Activated CD8-positive, alpha-beta T cell treated with anti-CD3 and anti-CD28 coated beads for 36 hours (primary cell): ENCODE measurements at regions of chr11 and their contacts with region 1.

Region 1: GRCh38 chr11:68312117-68312779 is at the start of gene LRP5:
- DNase-seq: peak; percentile 27
- ATAC-seq: peak; percentile 56
- H3K4me3 Mint-ChIP-seq: peak within 1 kb of the TSS; percentile 92
- H3K27ac Mint-ChIP-seq: peak within 1 kb of the TSS; percentile 72
- H3K4me1 Mint-ChIP-seq: peaks cover 13% of the 10 kb centered on the region
- H3K27me3 Mint-ChIP-seq: peaks cover 2% of the 10 kb centered on the region
- CTCF ChIP-seq: no peak
- total RNA-seq, gene LRP5: 10.5 to 15.3 TPM

Region 2: GRCh38 chr11:68213555-68214174 is 98.6 kb before region 1 on chr11:
- CTCF ChIA-PET with region 1: no interaction called
- POLR2A ChIA-PET with region 1: no interaction called
- intact Hi-C with region 1: no loop called
- DNase-seq: peak; percentile 78
- ATAC-seq: peak; percentile 53
- H3K4me3 Mint-ChIP-seq: peak overlapping the region; percentile 55
- H3K27ac Mint-ChIP-seq: no peak overlapping the region
- H3K4me1 Mint-ChIP-seq: peaks cover 41% of the 10 kb centered on the region
- H3K27me3 Mint-ChIP-seq: peaks cover 9% of the 10 kb centered on the region
- CTCF ChIP-seq: no peak

Region 3: GRCh38 chr11:68383976-68384501 is 71.8 kb after region 1 on chr11:
- CTCF ChIA-PET with region 1: interaction called, 6 read pairs
- POLR2A ChIA-PET with region 1: no interaction called
- intact Hi-C with region 1: loop called (anchors 10 kb)
- DNase-seq: peak; percentile 79
- ATAC-seq: peak; percentile 69
- H3K4me3 Mint-ChIP-seq: no peak overlapping the region
- H3K27ac Mint-ChIP-seq: no peak overlapping the region
- H3K4me1 Mint-ChIP-seq: peaks cover 15% of the 10 kb centered on the region
- H3K27me3 Mint-ChIP-seq: peaks cover 2% of the 10 kb centered on the region
- CTCF ChIP-seq: peak; percentile 95

Region 4: GRCh38 chr11:68560216-68560615 is 248.0 kb after region 1 on chr11:
- CTCF ChIA-PET with region 1: no interaction called
- POLR2A ChIA-PET with region 1: no interaction called
- intact Hi-C with region 1: no loop called
- DNase-seq: no peak
- ATAC-seq: no peak
- H3K4me3 Mint-ChIP-seq: no peak overlapping the region
- H3K27ac Mint-ChIP-seq: no peak overlapping the region
- H3K4me1 Mint-ChIP-seq: peaks cover 13% of the 10 kb centered on the region
- H3K27me3 Mint-ChIP-seq: no peaks in the 10 kb centered on the region
- CTCF ChIP-seq: no peak